Psoas muscle (tissue), 8 donors: ENCODE measurements at regions of chr12 and their contacts with region 1.

Region 1: GRCh38 chr12:25213338-25213737 is 18.3 kb downstream of the ETFRF1 start:
- DNase-seq: no peak
- ATAC-seq: no peak
- H3K4me3 ChIP-seq: no peak overlapping the region
- H3K27ac ChIP-seq: no peak overlapping the region
- H3K4me1 ChIP-seq: no peaks in the 10 kb centered on the region
- H3K27me3 ChIP-seq: no peaks in the 10 kb centered on the region
- CTCF ChIP-seq: no peak

Region 2: DNA sequence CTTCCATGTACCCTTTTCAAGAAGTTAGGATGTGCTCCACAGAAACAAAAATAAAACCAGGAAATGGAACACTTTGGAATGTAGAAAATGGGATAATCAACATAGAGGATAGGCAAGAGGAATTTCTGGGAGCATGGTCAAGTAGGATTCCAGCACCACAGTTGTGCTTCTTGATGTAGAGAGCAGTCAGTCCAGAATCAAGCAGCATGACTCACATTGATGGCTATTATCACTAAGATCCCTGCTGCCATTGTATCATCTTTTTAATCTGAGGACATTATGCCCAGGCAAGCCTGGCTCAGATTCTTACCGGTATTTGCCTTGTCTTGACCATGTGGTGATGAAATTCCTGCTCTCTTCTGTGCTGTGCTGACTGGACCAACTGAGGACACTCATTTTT is 12.6 kb before region 1 on chr12:
- intact Hi-C with region 1: loop called in 1 of 2 experiments (anchors 1 kb)
- DNase-seq: no peak
- ATAC-seq: peak; percentile 33 to 58 (median 45)
- H3K4me3 ChIP-seq: no peak overlapping the region
- H3K27ac ChIP-seq: no peak overlapping the region
- H3K4me1 ChIP-seq: peaks cover 26% of the 10 kb centered on the region
- H3K27me3 ChIP-seq: no peaks in the 10 kb centered on the region
- CTCF ChIP-seq: no peak

Region 3: DNA sequence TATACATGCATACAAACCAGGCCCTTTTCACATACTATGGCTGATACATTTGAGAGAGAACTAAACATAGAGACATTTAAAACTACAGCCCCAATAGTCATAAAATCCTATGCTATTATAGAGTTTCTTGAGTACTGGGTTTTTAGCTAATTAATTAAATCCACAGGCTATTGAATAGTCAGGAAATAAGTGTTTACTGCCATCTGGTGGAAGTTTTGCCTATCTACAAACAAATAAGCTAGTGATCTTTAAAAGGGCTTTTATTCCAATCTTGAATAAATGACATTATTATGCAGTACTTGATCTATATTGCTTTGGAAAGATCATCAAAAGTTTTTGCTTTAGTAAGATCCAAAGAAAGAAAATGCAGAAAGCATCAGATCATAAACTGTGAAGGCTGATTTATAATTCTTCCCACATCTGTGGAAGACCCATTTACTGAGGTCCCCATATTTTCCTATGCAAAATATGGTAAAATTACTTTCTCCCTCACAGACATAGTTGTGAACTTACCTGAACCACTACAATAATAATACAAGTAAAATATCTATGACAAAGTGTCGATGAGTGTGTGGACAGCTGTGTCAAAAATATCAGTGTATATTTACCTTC is 1488.4 kb after region 1 on chr12:
- intact Hi-C with region 1: loop called in 1 of 2 experiments (anchors 10 kb)
- DNase-seq: no peak
- ATAC-seq: no peak
- H3K4me3 ChIP-seq: no peak overlapping the region
- H3K27ac ChIP-seq: no peak overlapping the region
- H3K4me1 ChIP-seq: peaks cover 7% of the 10 kb centered on the region
- H3K27me3 ChIP-seq: no peaks in the 10 kb centered on the region
- CTCF ChIP-seq: peak; percentile 65